Activated CD8-positive, alpha-beta T cell treated with anti-CD3 and anti-CD28 coated beads for 36 hours (primary cell): ENCODE measurements at regions of chr15 and their contacts with region 1.

Region 1: DNA sequence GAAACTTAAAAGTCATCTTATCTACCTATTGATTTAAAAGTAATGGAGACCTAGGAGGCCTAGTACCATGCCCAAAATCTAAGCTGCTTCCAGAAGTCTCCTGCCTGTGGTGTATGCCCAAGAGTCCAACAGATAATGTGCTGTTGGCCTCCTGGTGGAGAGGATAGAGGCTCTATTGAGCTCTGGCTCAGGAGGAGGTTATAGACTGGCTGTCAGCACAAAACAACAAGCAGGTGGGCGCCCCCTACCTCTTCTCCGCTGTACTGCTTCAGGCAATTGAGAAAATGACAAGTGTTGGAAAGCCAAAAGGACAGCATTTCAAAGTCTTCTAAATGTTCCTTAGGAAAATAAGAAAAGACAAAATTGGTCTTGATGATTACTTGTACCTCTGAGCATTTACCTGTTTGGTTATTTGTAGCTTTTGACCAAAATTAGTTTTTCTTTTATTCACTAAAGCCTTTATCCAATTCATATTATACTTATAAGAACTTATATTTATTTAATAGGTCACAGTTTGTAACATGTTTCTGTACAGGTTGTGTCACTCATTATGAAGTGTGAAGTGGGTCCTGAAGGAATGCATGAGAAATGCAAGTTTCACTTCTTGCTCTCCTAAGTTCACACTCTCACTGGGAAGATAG is 17.2 kb upstream of the GNB5 start:
- DNase-seq: peak; percentile 90
- ATAC-seq: peak; percentile 100
- H3K4me3 Mint-ChIP-seq: no peak overlapping the region
- H3K27ac Mint-ChIP-seq: no peak overlapping the region
- H3K4me1 Mint-ChIP-seq: no peaks in the 10 kb centered on the region
- H3K27me3 Mint-ChIP-seq: no peaks in the 10 kb centered on the region
- CTCF ChIP-seq: peak; percentile 95

Region 2: GRCh38 chr15:51982013-51982769 is 226.2 kb before region 1 on chr15:
- CTCF ChIA-PET with region 1: interaction called, 11 read pairs
- POLR2A ChIA-PET with region 1: no interaction called
- intact Hi-C with region 1: no loop called
- DNase-seq: peak; percentile 76
- ATAC-seq: peak; percentile 95
- H3K4me3 Mint-ChIP-seq: peak overlapping the region; percentile 70
- H3K27ac Mint-ChIP-seq: peak overlapping the region; percentile 86
- H3K4me1 Mint-ChIP-seq: peaks cover 14% of the 10 kb centered on the region
- H3K27me3 Mint-ChIP-seq: no peaks in the 10 kb centered on the region
- CTCF ChIP-seq: peak; percentile 93

Region 3: DNA sequence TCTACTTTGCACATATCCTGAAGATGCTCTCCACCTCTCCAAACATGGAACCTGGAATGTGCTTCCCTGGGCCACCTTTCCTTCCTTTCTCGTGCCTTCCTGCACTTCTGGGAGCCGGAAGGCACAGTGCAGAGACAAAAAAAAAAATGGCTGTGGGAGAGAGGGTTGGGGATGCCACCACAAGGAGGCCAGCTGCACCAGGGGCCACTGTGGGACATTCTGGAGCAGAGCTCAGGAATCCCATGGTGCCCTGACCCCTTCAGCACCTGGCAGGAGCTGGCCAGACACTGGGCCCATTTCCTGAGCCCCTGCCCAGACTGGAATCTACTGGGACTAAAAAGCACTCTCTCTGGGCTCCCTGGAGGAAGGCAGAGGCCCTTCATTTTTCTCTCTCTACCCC is 87.9 kb before region 1 on chr15:
- CTCF ChIA-PET with region 1: no interaction called
- POLR2A ChIA-PET with region 1: no interaction called
- intact Hi-C with region 1: no loop called
- DNase-seq: no peak
- ATAC-seq: no peak
- H3K4me3 Mint-ChIP-seq: no peak overlapping the region
- H3K27ac Mint-ChIP-seq: no peak overlapping the region
- H3K4me1 Mint-ChIP-seq: peaks cover 7% of the 10 kb centered on the region
- H3K27me3 Mint-ChIP-seq: no peaks in the 10 kb centered on the region
- CTCF ChIP-seq: no peak

Region 4: DNA sequence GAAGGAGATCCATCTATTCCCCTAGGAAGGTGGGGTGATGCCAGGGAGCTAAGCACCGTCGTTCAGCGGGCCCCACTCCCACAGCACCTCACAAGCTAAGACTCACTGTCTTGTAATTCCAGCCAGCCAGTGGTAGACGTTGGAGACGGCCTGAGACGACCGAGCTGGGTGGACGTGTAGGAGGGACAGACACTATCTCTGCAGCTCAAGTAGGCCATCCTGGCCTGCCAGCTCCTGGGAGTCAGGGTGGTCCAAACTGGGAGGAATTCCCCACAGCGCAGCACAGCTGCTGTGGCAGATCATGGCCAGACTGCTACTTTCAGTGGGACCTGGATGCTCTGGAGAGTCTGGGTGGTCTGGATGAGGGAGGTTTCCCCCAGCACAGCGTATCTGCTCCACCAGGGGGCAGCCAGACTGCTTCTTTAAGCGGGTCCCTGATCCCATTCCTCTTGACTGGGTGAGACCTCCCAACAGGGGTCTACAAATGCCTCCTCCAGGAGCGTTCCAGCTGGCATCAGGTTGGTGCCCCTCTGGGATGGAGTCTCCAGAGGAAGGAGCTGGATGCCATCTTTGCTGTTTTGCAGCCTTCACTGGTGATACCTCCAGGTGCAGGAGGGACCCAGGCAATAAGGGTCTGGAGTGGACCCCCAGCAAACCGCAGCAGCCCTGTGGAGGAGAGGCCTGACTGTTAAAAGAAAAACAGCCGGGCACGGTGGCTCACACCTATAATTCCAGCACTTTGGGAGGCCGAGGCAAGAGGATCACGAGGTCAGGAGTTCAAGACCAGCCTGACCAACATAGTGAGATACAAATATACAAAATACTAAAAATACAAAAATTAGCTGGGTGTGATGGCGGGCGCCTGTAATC is 44.9 kb before region 1 on chr15:
- CTCF ChIA-PET with region 1: interaction called, 28 read pairs
- POLR2A ChIA-PET with region 1: no interaction called
- intact Hi-C with region 1: no loop called
- DNase-seq: peak; percentile 52
- ATAC-seq: peak; percentile 61
- H3K4me3 Mint-ChIP-seq: no peak overlapping the region
- H3K27ac Mint-ChIP-seq: no peak overlapping the region
- H3K4me1 Mint-ChIP-seq: peaks cover 28% of the 10 kb centered on the region
- H3K27me3 Mint-ChIP-seq: no peaks in the 10 kb centered on the region
- CTCF ChIP-seq: no peak

Region 5: DNA sequence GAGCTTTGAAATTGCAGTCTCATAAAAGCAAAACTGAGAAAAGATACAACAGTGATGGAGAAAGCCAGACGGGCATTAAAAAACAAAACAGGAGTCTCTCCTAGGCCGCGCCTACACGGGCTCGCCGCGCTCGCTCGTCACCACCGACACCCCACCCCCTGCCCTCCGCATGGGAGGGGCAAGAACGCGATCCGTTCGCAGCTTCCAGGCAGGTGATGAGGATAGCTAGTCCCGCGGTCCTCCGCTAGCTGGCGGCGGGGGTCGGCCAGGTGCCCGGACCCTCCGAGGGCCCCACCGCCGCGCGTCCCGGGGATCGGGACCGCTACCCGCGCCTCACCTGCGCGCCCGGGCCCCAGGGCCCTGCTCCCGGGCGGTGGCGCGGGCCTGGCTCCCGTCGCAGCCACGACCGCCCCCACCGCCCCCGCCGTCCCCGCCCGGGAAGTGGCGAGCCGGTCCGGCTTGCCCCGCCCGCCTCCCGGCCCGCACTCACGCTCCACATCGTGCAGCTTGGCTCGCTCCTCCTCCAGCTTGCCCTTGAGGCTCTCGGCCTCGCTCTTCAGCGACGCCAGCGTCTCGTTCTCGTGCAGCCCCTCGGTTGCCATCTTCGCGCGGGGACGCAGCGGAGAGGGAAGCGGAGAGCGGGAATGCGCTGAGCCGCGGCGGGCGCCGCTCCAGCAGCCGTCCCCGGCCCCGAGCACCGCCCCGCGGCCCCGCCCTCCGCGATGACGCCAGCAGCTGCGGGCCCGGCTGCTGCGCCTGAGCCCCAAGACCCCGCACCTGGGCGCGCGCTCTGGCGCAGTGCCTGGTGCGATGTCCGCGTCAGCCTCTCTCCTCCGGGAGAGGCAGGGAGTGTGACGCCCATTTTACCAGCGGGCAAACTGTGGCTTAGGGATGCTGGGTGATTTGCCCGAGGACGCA is 28.9 kb before region 1 on chr15:
- CTCF ChIA-PET with region 1: interaction called, 27 read pairs
- POLR2A ChIA-PET with region 1: interaction called, 6 read pairs
- intact Hi-C with region 1: no loop called
- DNase-seq: peak; percentile 91
- ATAC-seq: peak; percentile 90
- H3K4me3 Mint-ChIP-seq: peak overlapping the region; percentile 78
- H3K27ac Mint-ChIP-seq: peak overlapping the region; percentile 94
- H3K4me1 Mint-ChIP-seq: peaks cover 20% of the 10 kb centered on the region
- H3K27me3 Mint-ChIP-seq: no peaks in the 10 kb centered on the region
- CTCF ChIP-seq: peak; percentile 31

Region 6: DNA sequence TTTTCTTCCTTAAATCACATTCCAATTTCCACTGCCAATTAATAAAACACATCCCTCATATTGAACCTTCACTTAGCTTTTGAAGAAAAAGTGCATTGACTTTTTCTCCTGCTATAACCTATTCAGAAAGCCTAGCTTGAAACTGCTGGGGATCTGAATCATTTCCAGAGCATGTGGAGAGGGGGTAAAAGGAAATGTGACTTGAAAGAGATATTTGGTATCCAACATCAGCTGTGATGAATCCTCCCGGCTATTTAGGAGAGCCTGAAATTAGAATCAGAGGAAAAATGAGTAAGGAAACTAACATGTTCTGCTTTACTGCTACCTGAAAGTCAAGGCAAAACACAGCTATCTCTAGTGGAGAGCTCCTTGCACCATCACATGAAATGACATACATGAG is 14.6 kb before region 1 on chr15:
- CTCF ChIA-PET with region 1: interaction called, 21 read pairs
- POLR2A ChIA-PET with region 1: interaction called, 3 read pairs
- intact Hi-C with region 1: no loop called
- DNase-seq: no peak
- ATAC-seq: no peak
- H3K4me3 Mint-ChIP-seq: no peak overlapping the region
- H3K27ac Mint-ChIP-seq: no peak overlapping the region
- H3K4me1 Mint-ChIP-seq: no peaks in the 10 kb centered on the region
- H3K27me3 Mint-ChIP-seq: no peaks in the 10 kb centered on the region
- CTCF ChIP-seq: no peak

Region 7: GRCh38 chr15:52233405-52233804 is 25.0 kb after region 1 on chr15:
- CTCF ChIA-PET with region 1: interaction called, 54 read pairs
- POLR2A ChIA-PET with region 1: no interaction called
- intact Hi-C with region 1: no loop called
- DNase-seq: no peak
- ATAC-seq: no peak
- H3K4me3 Mint-ChIP-seq: no peak overlapping the region
- H3K27ac Mint-ChIP-seq: peak overlapping the region; percentile 72
- H3K4me1 Mint-ChIP-seq: peaks cover 40% of the 10 kb centered on the region
- H3K27me3 Mint-ChIP-seq: no peaks in the 10 kb centered on the region
- CTCF ChIP-seq: no peak

Region 8: GRCh38 chr15:52518490-52519371 is 310.3 kb after region 1 on chr15:
- CTCF ChIA-PET with region 1: no interaction called
- POLR2A ChIA-PET with region 1: no interaction called
- intact Hi-C with region 1: no loop called
- DNase-seq: no peak
- ATAC-seq: no peak
- H3K4me3 Mint-ChIP-seq: no peak overlapping the region
- H3K27ac Mint-ChIP-seq: no peak overlapping the region
- H3K4me1 Mint-ChIP-seq: peaks cover 7% of the 10 kb centered on the region
- H3K27me3 Mint-ChIP-seq: no peaks in the 10 kb centered on the region
- CTCF ChIP-seq: no peak